ENCODE measurements at regions of chr6 and their contacts with region 1.

Region 1: DNA sequence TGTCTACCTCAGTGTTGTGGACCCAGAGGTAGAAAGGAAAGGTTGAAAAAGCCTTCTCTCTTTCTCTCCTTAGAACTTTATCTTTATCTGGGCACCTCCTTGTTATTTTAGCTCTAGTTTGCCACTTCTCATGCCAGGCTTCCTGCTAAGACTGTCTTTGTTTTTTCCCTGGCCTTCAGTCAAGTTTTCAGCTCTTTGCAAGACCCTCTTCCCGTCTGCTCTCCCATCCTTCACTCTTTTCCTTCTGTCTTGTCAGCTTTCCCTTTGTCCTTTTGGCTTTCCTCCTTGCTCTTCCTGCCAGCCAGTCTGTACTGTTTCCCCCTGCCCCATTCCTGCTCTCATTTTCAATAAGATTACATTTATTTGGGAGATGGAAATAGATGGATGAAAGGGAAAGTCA is 86.8 kb upstream of the CCN6 start:
- DNase-seq: no peak
- H3K4me3 ChIP-seq: no peak overlapping the region
- CTCF ChIP-seq: no peak

Region 2: DNA sequence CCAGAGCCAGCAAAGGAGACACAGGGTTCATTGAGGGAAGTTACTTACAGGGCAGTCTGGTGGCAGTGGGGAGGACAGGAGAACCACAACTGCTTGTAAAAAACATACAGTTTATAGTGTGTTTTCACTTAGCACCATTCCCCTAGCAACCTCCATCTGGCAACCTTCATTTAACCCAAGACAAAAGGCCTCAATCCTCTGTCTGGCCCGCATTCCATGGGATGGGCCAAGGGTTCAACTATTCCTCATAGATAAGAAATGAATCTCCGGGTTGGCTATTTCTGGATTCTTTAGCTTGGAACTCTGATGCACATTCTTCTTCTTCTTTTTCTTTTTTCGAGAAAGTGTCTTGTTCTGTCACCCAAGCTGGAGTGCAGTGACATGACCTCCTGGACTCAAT is 67.6 kb before region 1 on chr6:
- in situ Hi-C with region 1: no loop called
- DNase-seq: no peak
- H3K4me3 ChIP-seq: no peak overlapping the region
- CTCF ChIP-seq: no peak

Region 3: GRCh38 chr6:112029045-112029822 is 62.1 kb after region 1 on chr6:
- in situ Hi-C with region 1: loop called (anchors 5 kb)
- DNase-seq: peak; percentile 41
- H3K4me3 ChIP-seq: no peak overlapping the region
- CTCF ChIP-seq: peak; percentile 73